Left lung (tissue), 14 donors: ENCODE measurements at regions of chr5 and their contacts with region 1.

Region 1: GRCh38 chr5:98905857-98906690 is 22.7 kb downstream of the CHD1 start:
- DNase-seq: peak in 1 of 4 donors; percentile 46
- ATAC-seq: peak; percentile 74
- H3K4me3 ChIP-seq: no peak overlapping the region
- H3K27ac ChIP-seq: no peak overlapping the region
- H3K4me1 ChIP-seq: peaks cover 0 to 33% of the 10 kb centered on the region in 2 donors
- H3K27me3 ChIP-seq: no peaks in the 10 kb centered on the region
- CTCF ChIP-seq: peak; percentile 66 to 70

Region 2: DNA sequence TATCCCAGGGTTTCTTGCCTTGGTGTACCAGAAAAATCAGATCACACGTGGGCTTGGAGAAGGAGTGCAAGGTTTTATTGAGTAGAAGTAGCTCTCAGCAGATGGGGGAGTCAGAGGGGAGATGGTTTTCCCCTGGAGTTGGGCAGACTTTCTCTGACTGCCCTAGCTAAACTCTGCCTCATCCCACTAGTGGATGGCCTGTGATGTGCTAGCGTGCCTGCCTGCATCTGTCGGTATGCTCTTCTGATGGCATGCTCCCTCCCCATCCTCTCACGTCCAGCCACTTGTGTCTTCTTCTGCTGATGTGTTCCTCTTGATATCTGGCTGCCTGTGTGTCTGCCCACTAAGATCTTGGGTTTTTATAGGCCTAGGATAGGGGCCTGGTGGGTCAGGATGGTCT is 748.7 kb before region 1 on chr5:
- intact Hi-C with region 1: no loop called
- DNase-seq: no peak
- ATAC-seq: no peak
- H3K4me3 ChIP-seq: no peak overlapping the region
- H3K27ac ChIP-seq: no peak overlapping the region
- H3K4me1 ChIP-seq: no peaks in the 10 kb centered on the region
- H3K27me3 ChIP-seq: no peaks in the 10 kb centered on the region
- CTCF ChIP-seq: no peak

Region 3: DNA sequence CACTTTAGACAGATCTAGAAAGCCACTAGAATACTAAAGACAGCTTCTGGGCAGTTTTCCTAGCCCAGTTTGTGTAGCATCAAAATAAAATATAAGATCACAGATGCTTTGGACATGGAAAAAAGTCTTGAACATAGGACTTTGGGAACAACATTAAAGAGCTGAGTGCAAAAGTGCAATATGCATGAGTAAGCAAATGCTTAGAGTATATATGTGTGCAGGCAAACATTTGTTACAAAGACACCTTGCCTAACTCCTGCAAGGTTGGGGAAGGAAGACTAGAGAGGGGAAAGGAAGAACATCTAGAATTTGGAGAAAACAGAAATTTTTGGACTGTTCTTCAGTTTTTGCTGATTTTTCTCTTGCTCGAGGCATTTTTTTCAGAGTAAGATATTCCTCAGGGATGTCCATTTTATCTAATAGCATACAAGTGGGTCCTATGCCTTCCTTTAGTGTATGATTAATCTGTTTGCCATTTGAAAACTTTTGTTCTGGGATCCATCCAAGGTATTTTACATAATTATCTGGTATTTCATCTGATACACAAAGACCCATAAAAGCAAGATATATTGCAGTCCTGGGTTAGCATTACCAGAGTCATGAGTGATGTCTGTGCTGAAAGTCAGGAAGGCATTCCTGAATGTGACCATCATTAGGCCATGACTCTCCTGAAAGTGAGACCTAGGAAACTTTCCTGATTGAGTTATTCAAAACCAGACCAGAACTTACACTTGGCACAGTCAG is 274.6 kb before region 1 on chr5:
- intact Hi-C with region 1: no loop called
- DNase-seq: no peak
- ATAC-seq: no peak
- H3K4me3 ChIP-seq: no peak overlapping the region
- H3K27ac ChIP-seq: no peak overlapping the region
- H3K4me1 ChIP-seq: no peaks in the 10 kb centered on the region
- H3K27me3 ChIP-seq: no peaks in the 10 kb centered on the region
- CTCF ChIP-seq: no peak

Region 4: GRCh38 chr5:99032234-99033013 is 126.3 kb after region 1 on chr5:
- intact Hi-C with region 1: loop called in 1 of 2 experiments (anchors 5 kb)
- DNase-seq: peak in 3 of 4 donors; percentile 50 to 81 (median 64)
- ATAC-seq: peak; percentile 92
- H3K4me3 ChIP-seq: peak overlapping the region in 1 of 2 donors; percentile 34
- H3K27ac ChIP-seq: peak overlapping the region; percentile 63 to 73
- H3K4me1 ChIP-seq: peaks cover 5 to 52% of the 10 kb centered on the region in 2 donors
- H3K27me3 ChIP-seq: no peaks in the 10 kb centered on the region
- CTCF ChIP-seq: peak; percentile 52 to 68